ENCODE measurements at regions of chr12 and their contacts with region 1.

Region 1: DNA sequence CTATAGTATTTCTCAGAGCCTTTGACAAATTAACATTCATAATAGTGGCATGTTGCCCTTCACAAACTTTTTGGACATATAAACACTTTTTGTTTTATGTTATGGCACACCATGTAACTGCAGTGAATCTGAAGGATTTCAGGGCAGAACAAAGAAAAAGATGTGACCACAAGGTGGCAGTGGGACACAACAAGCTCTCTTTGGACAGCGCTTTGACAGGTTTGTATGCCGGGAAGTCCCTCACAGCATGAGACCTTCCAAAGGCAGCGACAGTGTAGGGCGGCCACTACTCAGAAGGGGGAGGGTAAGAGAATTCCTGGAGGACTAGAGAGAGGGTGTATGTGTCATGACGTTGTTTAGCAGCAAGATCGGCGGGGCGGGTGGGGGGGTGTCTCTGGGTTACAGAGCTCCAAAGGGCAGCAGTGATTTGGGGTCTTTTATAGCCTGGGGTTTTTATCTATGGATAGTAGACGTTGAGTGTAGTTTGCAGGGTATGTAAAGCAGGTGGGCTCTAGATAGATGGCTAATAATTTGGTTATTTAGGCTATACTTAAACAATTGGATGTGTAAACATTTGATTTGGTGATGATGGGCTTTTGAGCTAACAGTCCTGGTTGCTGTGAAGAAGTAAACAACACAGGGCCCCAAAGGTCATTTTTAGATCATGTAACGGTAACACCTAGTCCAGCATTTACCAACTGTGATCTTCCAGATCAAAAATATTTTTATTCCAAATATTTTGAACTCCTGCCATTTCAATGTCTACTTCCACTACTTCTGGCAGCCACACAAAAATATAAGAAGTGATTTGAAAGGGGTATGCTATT is 22.9 kb downstream of the ETFBKMT start:
- DNase-seq: peak; percentile 53 to 85 (median 59)
- ATAC-seq: peak; percentile 96
- H3K4me3 ChIP-seq: no peak overlapping the region
- H3K4me1 ChIP-seq: no peaks in the 10 kb centered on the region
- CTCF ChIP-seq: no peak

Region 2: GRCh38 chr12:31804185-31804504 is 121.8 kb after region 1 on chr12:
- intact Hi-C with region 1: no loop called
- DNase-seq: no peak
- ATAC-seq: no peak
- H3K4me3 ChIP-seq: no peak overlapping the region
- H3K4me1 ChIP-seq: no peaks in the 10 kb centered on the region
- CTCF ChIP-seq: no peak

Region 3: DNA sequence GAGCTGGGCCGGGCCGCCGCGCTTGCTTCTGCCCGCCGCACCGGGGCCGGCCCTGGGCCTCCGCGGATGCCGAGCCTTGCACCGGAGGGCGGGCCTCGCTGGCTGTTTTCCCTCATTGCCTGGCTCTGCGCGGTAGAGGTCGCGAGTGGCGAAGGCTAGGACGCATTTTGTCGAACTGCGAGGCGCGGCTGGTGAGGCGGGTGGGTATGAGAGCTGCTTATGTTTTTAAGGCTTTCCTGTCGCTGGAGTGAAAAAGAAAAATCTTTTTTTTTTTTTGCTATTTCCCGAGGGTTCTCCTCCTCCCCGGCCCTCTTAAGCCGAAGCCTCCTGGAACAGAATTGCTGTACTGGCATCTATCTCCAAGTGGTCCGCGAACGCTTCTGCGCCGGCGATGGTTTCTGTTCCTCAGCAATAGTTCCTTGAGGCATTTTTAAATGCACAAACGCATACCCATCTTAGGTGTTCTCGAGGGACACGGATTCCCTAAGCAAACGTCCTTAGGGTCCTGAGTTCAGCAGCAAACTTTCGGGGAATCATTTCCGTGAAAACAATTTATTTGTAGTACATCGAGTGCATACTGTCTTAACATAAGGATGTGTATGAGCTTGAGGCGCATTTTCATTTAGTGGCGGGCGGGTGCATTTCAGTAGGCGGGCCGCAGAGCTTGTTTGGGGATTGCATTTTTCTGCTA is 277.5 kb after region 1 on chr12:
- intact Hi-C with region 1: loop called in 1 of 2 experiments (anchors 10 kb)
- DNase-seq: peak; percentile 75 to 83 (median 79)
- ATAC-seq: peak; percentile 22
- H3K4me3 ChIP-seq: peak overlapping the region; percentile 35
- H3K4me1 ChIP-seq: peaks cover 23% of the 10 kb centered on the region
- CTCF ChIP-seq: no peak

Region 4: GRCh38 chr12:32302218-32303173 is 620.1 kb after region 1 on chr12:
- intact Hi-C with region 1: loop called in 1 of 2 experiments (anchors 5 kb)
- DNase-seq: peak in 2 of 3 donors; percentile 33 to 51
- ATAC-seq: peak; percentile 82
- H3K4me3 ChIP-seq: no peak overlapping the region
- H3K4me1 ChIP-seq: no peaks in the 10 kb centered on the region
- CTCF ChIP-seq: no peak

Measured in mucosa of descending colon (tissue), 3 donors.